PC-9 (cell line): ENCODE measurements at regions of chr20 and their contacts with region 1.

Region 1: GRCh38 chr20:4956200-4956810 is 45.0 kb downstream of the SLC23A2 start:
- DNase-seq: peak in 1 of 2 experiments; percentile 45
- H3K4me3 ChIP-seq: no peak overlapping the region
- H3K27ac ChIP-seq: no peak overlapping the region
- H3K4me1 ChIP-seq: peaks cover 9% of the 10 kb centered on the region
- H3K27me3 ChIP-seq: no peaks in the 10 kb centered on the region
- CTCF ChIP-seq: peak; percentile 88

Region 2: DNA sequence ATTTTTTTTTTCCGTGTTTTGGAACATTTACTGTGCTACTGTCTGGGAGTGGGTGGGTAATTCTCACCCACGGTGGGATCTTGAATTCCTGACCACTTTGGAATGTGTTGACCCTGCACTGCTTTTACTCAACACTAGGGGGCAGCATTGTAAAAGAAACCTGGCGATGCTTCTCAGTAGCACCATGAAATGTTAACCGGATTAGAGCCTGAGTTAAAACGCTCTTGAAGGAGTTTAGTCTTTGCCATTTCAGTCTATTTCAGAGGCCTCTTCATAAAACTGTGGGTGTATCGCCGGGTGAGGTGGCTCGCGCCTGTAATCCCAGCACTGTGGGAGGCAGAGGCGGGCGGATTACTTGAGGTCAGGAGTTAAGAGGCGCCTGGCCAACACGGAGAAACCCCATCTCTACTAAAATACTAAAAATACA is 349.0 kb before region 1 on chr20:
- CTCF ChIA-PET with region 1: no interaction called
- POLR2A ChIA-PET with region 1: no interaction called
- intact Hi-C with region 1: loop called (anchors 2 kb)
- DNase-seq: peak; percentile 49 to 57
- H3K4me3 ChIP-seq: no peak overlapping the region
- H3K27ac ChIP-seq: no peak overlapping the region
- H3K4me1 ChIP-seq: peaks cover 7% of the 10 kb centered on the region
- H3K27me3 ChIP-seq: no peaks in the 10 kb centered on the region
- CTCF ChIP-seq: peak; percentile 97

Region 3: DNA sequence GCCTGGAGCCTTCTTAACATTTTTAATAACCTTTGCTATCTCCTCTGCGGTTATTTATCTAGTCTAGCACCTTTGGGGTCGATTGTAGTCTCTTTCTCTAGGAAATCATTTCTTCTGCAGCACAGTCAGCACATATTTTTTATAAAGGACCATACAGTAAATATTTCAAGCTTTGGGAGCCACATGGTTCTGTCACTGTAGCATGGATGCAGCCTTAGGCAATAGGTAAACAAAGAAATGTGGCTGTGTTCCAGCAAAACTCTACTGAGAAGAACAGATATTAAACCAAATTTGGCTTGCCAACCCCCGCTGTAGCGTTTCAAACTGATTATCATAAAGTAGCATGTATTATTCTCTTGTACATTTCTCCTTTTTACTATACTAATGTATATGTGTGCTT is 50.7 kb before region 1 on chr20:
- CTCF ChIA-PET with region 1: interaction called, 14 read pairs
- POLR2A ChIA-PET with region 1: interaction called, 13 read pairs
- intact Hi-C with region 1: no loop called
- DNase-seq: no peak
- H3K4me3 ChIP-seq: no peak overlapping the region
- H3K27ac ChIP-seq: no peak overlapping the region
- H3K4me1 ChIP-seq: peaks cover 27% of the 10 kb centered on the region
- H3K27me3 ChIP-seq: no peaks in the 10 kb centered on the region
- CTCF ChIP-seq: no peak

Region 4: GRCh38 chr20:5065166-5065878 is 109.0 kb after region 1 on chr20:
- CTCF ChIA-PET with region 1: interaction called, 14 read pairs
- POLR2A ChIA-PET with region 1: no interaction called
- intact Hi-C with region 1: no loop called
- DNase-seq: peak in 1 of 2 experiments; percentile 78
- H3K4me3 ChIP-seq: peak overlapping the region; percentile 22; the same call in 1 of the 2 replicates
- H3K27ac ChIP-seq: peak overlapping the region; percentile 100
- H3K4me1 ChIP-seq: peaks cover 45% of the 10 kb centered on the region
- H3K27me3 ChIP-seq: no peaks in the 10 kb centered on the region
- CTCF ChIP-seq: no peak

Region 5: GRCh38 chr20:5090191-5090590 is 133.9 kb after region 1 on chr20:
- CTCF ChIA-PET with region 1: interaction called, 19 read pairs
- POLR2A ChIA-PET with region 1: no interaction called
- intact Hi-C with region 1: no loop called
- DNase-seq: no peak
- H3K4me3 ChIP-seq: no peak overlapping the region
- H3K27ac ChIP-seq: no peak overlapping the region
- H3K4me1 ChIP-seq: no peaks in the 10 kb centered on the region
- H3K27me3 ChIP-seq: no peaks in the 10 kb centered on the region
- CTCF ChIP-seq: no peak

Region 6: GRCh38 chr20:5100684-5101347 is 144.5 kb after region 1 on chr20:
- CTCF ChIA-PET with region 1: interaction called, 3 read pairs
- POLR2A ChIA-PET with region 1: no interaction called
- intact Hi-C with region 1: loop called (anchors 1 kb)
- DNase-seq: peak; percentile 56 to 72
- H3K4me3 ChIP-seq: no peak overlapping the region
- H3K27ac ChIP-seq: peak overlapping the region; percentile 64
- H3K4me1 ChIP-seq: 0 out of 2 replicates have a peak, but pooled peaks cover 4% of the 10 kb centered on the region
- H3K27me3 ChIP-seq: no peaks in the 10 kb centered on the region
- CTCF ChIP-seq: peak; percentile 93

Region 7: GRCh38 chr20:5191829-5192569 is 235.7 kb after region 1 on chr20:
- CTCF ChIA-PET with region 1: interaction called, 3 read pairs
- POLR2A ChIA-PET with region 1: no interaction called
- intact Hi-C with region 1: loop called (anchors 2 kb)
- DNase-seq: peak; percentile 39 to 62
- H3K4me3 ChIP-seq: no peak overlapping the region
- H3K27ac ChIP-seq: no peak overlapping the region
- H3K4me1 ChIP-seq: no peaks in the 10 kb centered on the region
- H3K27me3 ChIP-seq: no peaks in the 10 kb centered on the region
- CTCF ChIP-seq: peak; percentile 87